Activated naive CD8-positive, alpha-beta T cell treated with anti-CD3 and anti-CD28 coated beads, Interleukin-2, amount 10 ng/mL, durations not matched to agents 7 days and 5 days (primary cell): ENCODE measurements at regions of chr2 and their contacts with region 1.

Region 1: GRCh38 chr2:25362049-25362433 is 20.3 kb upstream of the DNMT3A start:
- DNase-seq: peak; percentile 97
- ATAC-seq: peak; percentile 98
- H3K4me3 Mint-ChIP-seq: peak overlapping the region; percentile 82
- H3K27ac Mint-ChIP-seq: peak overlapping the region; percentile 89
- H3K4me1 Mint-ChIP-seq: peaks cover 8% of the 10 kb centered on the region
- H3K27me3 Mint-ChIP-seq: no peaks in the 10 kb centered on the region

Region 2: DNA sequence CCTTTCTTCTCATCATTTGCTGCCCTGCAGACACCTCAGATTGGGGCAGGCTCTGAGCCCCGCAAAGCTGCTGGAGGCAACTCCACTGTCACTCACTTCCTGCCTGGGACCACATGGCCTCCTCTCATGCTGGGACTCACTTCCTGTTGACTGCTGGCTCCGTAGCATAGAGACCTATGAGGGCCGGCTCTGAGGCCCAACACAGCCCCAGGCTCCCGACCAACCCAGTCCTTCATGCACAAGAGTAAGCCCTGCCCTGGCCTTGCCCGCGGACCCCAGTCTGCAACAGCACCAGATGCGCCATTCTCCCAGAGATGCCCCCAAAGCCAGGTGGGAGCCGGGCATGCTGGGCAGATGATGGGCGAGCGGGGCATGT is 76.0 kb before region 1 on chr2:
- POLR2A ChIA-PET with region 1: interaction called, 14 read pairs
- DNase-seq: peak; percentile 77
- ATAC-seq: peak; percentile 100
- H3K4me3 Mint-ChIP-seq: peak overlapping the region; percentile 73
- H3K27ac Mint-ChIP-seq: peak overlapping the region; percentile 99
- H3K4me1 Mint-ChIP-seq: peaks cover 23% of the 10 kb centered on the region
- H3K27me3 Mint-ChIP-seq: no peaks in the 10 kb centered on the region

Region 3: DNA sequence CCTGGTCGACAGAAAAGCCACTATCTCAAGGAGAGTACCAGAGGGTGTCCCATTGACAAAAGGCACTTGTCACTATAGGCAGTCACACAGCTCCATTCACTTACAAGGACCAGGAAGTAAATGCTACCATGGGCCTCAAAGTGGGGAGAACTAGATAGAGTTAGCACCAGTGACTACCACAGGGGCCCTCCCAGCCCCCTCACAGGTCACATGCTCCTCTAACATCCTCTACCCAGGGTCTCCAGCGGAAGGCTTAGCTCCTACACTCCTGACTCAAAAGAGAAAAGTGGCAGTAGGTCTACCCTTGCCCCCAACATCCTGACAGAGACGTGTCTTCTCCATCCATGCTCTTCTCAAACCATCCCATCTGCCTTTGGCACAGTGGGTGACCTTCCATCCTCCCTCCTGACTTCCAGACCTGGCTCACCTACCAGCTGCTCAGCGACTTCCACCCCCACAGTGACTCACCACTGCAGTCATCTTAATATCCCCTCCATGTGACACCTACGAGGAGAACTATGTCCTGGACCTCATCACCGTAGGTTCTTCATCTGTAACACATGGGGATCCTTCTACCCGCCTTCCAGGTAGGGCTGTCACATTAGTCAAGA is 14.7 kb before region 1 on chr2:
- POLR2A ChIA-PET with region 1: interaction called, 10 read pairs
- DNase-seq: no peak
- ATAC-seq: peak; percentile 37
- H3K4me3 Mint-ChIP-seq: peak overlapping the region; percentile 15
- H3K27ac Mint-ChIP-seq: peak overlapping the region; percentile 74
- H3K4me1 Mint-ChIP-seq: peaks cover 23% of the 10 kb centered on the region
- H3K27me3 Mint-ChIP-seq: no peaks in the 10 kb centered on the region

Region 4: GRCh38 chr2:25402477-25402876 is 40.4 kb after region 1 on chr2:
- POLR2A ChIA-PET with region 1: interaction called, 12 read pairs
- DNase-seq: no peak
- ATAC-seq: peak; percentile 74
- H3K4me3 Mint-ChIP-seq: peak overlapping the region; percentile 77
- H3K27ac Mint-ChIP-seq: peak overlapping the region; percentile 97
- H3K4me1 Mint-ChIP-seq: peaks cover 30% of the 10 kb centered on the region
- H3K27me3 Mint-ChIP-seq: peaks cover 2% of the 10 kb centered on the region

Region 5: DNA sequence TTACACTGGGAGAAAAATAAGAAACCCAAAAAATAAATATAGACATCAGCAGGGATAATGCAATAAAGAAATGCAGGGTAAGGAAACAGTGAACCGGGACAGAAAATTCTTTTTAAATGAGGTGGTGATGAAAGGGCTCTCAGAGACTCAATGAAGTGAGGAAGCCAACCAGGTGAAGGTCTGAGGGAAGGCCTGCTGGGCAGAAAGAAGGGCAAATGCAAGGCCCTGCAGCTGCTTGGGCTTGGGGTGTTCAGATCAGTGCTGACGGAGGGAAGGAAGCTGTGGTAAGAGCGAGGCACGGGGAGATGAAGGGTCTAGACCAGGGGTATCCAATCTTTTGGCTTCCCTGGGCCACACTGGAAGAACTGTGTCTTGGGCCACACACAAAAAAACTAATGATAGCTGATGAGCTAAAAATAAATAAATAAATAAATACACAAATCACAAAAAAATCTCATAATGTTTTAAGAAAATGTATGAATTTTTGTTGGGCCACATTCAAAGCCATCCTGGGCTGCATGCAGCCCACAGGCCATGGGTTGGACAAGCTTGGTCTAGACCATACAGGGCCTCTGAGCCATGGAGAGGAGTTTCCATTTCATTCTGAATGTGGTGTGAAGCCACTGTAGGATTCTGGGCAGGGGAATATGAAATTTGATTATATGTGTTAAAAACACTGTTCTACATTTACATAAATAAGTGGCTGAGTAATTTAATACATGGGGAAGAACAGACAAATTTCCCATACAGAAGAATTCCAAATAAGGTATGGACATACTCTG is 76.0 kb after region 1 on chr2:
- POLR2A ChIA-PET with region 1: no interaction called
- DNase-seq: no peak
- ATAC-seq: no peak
- H3K4me3 Mint-ChIP-seq: no peak overlapping the region
- H3K27ac Mint-ChIP-seq: no peak overlapping the region
- H3K4me1 Mint-ChIP-seq: peaks cover 7% of the 10 kb centered on the region
- H3K27me3 Mint-ChIP-seq: no peaks in the 10 kb centered on the region

Region 6: DNA sequence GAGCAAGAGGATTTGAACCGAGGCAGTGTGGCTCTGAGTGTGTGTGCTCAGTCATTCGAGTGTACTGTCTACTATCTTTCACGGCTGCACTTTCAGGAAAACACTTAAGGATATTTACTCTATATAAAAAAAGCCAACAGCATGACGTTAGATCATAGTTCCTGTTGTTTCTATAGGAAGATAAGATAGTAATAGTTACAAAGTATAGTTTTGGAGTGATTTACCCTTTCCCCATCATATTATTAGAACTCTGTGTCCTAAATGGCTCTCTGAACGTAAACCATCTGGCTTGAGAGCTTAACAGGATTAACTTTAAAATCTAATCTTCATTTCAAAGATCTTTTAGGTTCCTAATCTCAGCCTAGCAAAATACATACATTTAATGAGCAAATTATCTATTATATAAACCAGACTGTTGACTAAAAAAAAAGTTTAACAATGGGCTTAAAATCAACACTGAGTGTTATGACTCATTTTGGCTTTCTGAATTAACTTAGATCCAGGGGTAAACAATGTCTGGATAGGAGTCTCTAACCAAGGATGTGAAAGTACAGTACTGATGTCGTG is 130.0 kb after region 1 on chr2:
- POLR2A ChIA-PET with region 1: no interaction called
- DNase-seq: no peak
- ATAC-seq: no peak
- H3K4me3 Mint-ChIP-seq: no peak overlapping the region
- H3K27ac Mint-ChIP-seq: no peak overlapping the region
- H3K4me1 Mint-ChIP-seq: peaks cover 9% of the 10 kb centered on the region
- H3K27me3 Mint-ChIP-seq: no peaks in the 10 kb centered on the region

Region 7: GRCh38 chr2:25582077-25582830 is 220.2 kb after region 1 on chr2:
- POLR2A ChIA-PET with region 1: no interaction called
- DNase-seq: no peak
- ATAC-seq: no peak
- H3K4me3 Mint-ChIP-seq: no peak overlapping the region
- H3K27ac Mint-ChIP-seq: no peak overlapping the region
- H3K4me1 Mint-ChIP-seq: peaks cover 8% of the 10 kb centered on the region
- H3K27me3 Mint-ChIP-seq: no peaks in the 10 kb centered on the region